Body of pancreas (tissue), 4 donors: ENCODE measurements at regions of chr13 and their contacts with region 1.

Region 1: GRCh38 chr13:103140001-103140671 is 73.9 kb upstream of the SLC10A2 start:
- DNase-seq: no peak
- ATAC-seq: peak; percentile 74
- H3K4me3 ChIP-seq: no peak overlapping the region
- H3K27ac ChIP-seq: no peak overlapping the region
- H3K4me1 ChIP-seq: no peaks in the 10 kb centered on the region
- H3K27me3 ChIP-seq: no peaks in the 10 kb centered on the region
- CTCF ChIP-seq: peak; percentile 24 to 58 (median 44)
- POLR2A ChIP-seq: no peak

Region 2: DNA sequence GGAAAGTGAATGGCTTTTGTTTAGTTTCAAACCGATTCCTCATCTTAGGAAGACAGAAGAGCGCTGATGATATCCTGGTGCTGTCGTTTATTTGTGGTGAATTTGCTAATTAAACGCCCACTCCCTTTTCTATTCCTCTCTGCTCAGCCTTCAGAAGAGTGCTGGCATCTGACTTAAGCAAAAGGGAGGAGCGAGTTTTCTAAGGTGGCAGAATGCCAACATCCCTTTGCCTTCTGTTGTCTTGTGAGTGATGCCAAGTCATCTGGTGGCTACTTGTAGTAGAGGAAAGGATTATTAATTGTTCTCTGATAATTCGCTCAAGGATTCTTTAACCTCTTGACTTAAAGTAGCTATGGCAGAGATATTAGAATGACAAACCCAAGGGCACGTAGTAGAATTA is 226.2 kb before region 1 on chr13:
- intact Hi-C with region 1: loop called (anchors 10 kb)
- DNase-seq: peak in 2 of 4 donors; percentile 8 to 15
- ATAC-seq: no peak
- H3K4me3 ChIP-seq: no peak overlapping the region
- H3K27ac ChIP-seq: no peak overlapping the region
- H3K4me1 ChIP-seq: no peaks in the 10 kb centered on the region
- H3K27me3 ChIP-seq: no peaks in the 10 kb centered on the region
- CTCF ChIP-seq: no peak
- POLR2A ChIP-seq: no peak

Region 3: DNA sequence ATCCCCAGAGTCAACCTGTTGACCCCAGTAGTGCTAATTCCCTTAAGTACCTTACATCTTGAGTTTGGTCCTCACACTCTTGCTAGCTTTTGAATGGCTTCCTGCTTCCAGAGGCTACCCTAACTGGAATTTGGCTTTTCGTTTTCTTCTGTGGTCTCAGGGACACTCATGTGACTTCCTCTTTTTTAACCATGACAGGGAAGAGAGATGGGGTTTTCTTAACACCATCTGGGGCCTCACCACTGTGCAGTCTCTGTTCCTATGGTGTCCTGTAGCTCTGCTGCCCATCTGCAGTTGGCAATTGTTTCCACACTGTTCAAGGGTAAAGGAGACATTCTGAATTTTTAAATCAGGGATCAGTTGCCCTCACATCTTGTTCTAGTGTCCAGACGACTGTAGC is 140.6 kb before region 1 on chr13:
- intact Hi-C with region 1: no loop called
- DNase-seq: no peak
- ATAC-seq: no peak
- H3K4me3 ChIP-seq: no peak overlapping the region
- H3K27ac ChIP-seq: no peak overlapping the region
- H3K4me1 ChIP-seq: no peaks in the 10 kb centered on the region
- H3K27me3 ChIP-seq: no peaks in the 10 kb centered on the region
- CTCF ChIP-seq: no peak
- POLR2A ChIP-seq: no peak